Activated CD8-positive, alpha-beta T cell treated with anti-CD3 and anti-CD28 coated beads, Interleukin-2, amount 10 ng/mL, durations not matched to agents 7 days and 5 days (primary cell): ENCODE measurements at regions of chr13 and their contacts with region 1.

Region 1: DNA sequence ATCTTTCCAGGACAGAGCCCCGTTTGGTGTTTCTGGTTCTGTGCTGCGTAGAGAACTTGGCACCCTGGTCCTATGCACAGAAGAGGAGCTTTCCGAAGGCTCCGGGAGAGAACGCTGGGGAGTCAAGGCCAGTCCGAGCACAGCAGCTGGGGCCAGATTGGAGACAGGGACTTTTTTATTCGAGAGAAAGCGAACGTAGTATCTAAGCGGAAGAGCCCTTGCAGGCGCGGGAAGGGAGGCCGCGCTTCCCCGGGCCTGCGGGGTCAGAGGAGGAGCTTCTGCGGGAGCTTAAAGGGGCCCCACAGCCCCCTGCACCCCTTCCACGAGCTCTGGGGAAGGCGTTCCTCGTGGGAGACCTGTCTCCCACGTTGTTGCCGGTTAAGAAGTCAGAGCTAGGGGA is 48.6 kb upstream of the ARHGEF7 start:
- DNase-seq: no peak
- ATAC-seq: no peak
- H3K4me3 Mint-ChIP-seq: peak overlapping the region; percentile 27
- H3K27ac Mint-ChIP-seq: no peak overlapping the region
- H3K4me1 Mint-ChIP-seq: peaks cover 4% of the 10 kb centered on the region
- H3K27me3 Mint-ChIP-seq: peaks cover 44% of the 10 kb centered on the region

Region 2: DNA sequence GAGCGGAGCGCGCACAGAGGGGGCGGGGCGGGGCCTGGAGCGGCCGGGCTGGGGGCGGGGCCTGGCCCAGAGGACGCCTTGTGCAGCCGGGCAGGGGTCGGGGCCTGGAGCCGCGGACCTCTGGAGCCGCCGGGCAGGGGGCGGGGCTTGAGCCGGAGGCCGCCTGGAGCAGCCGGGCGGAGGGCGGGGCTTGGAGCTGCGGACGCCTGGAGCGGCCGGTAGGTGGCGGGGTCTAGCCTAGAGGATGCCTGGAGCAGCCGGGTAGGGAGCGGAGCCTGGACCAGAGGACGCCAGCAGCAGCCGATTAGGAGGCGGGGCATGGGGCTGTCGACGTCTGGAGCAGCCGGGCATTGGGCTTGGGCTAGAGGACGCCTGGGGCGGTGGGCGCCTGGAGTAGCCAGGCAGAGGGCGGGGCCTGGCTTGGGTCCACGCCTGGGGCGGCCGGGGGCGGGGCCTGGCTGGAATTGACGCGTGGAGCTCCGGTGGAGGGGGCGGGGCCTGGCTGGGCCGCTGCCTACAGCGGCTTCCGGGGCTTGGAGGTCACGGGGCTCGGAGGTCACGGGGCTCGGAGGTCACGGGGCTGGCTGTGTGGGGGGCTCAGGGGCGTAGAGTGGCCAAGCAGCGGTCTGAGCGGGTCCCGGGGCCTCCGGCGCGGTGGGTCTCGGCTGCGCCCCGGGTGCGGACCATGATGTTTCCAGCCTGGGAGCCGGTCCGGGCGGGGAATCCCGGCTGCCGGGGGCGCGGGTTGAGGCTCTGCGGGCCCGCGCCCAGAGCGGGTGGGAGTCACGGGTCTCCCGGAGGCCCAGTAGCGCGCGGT is 151.3 kb before region 1 on chr13 and contains the start of gene ANKRD10:
- CTCF ChIA-PET with region 1: interaction called, 10 read pairs
- POLR2A ChIA-PET with region 1: no interaction called
- DNase-seq: peak; percentile 97
- ATAC-seq: peak; percentile 83
- H3K4me3 Mint-ChIP-seq: peak within 1 kb of the TSS; percentile 92
- H3K27ac Mint-ChIP-seq: peak within 1 kb of the TSS; percentile 97
- H3K4me1 Mint-ChIP-seq: peaks cover 43% of the 10 kb centered on the region
- H3K27me3 Mint-ChIP-seq: no peaks in the 10 kb centered on the region
- total RNA-seq, gene ANKRD10: 83.9 to 86.3 TPM

Region 3: DNA sequence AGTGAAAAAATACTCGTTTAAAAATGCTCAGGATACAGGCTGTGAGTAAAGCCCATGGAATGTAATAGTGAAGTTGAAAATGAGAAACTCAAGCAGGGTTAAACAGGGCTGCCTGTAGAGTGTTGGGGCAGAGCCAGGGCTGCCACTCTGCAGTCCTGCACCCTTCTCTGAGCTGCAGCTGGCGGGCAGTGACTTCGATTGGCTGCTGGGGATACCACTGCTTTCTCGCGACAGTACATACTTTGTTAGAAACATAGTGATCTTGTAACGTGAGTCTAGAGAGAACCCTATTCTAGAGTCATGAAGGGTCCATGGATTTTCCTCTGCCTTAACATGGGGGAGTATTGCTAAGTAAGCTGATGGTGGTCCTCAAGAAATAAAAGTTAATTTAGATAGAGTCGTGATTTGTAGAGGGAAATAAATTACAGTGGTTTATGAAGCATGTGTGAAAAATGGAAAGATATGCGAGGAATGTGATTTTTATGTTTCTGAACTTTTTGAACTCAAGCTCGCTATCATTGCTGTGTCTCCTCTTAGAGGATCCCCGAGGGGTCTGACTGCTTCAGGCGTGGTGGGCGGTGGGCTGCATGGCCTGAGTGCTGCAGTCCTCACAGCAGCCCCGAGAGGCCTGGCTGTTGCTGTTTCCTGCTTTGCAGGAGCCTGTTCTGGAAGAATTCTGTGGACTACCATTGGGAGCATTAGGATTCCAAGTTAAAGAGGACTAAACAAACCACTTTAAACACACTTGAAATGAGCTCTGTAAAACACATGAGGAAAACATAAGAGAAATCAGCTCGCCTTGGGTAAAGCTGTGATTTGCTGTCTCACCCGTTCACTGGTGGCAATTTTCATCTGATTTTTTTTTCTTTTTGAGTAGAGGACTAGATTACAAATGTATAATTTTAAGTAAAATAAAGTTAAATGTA is 144.3 kb after region 1 on chr13:
- CTCF ChIA-PET with region 1: interaction called, 60 read pairs
- POLR2A ChIA-PET with region 1: no interaction called
- DNase-seq: no peak
- ATAC-seq: no peak
- H3K4me3 Mint-ChIP-seq: no peak overlapping the region
- H3K27ac Mint-ChIP-seq: no peak overlapping the region
- H3K4me1 Mint-ChIP-seq: peaks cover 7% of the 10 kb centered on the region
- H3K27me3 Mint-ChIP-seq: no peaks in the 10 kb centered on the region

Region 4: GRCh38 chr13:111225810-111226546 is 159.4 kb after region 1 on chr13:
- CTCF ChIA-PET with region 1: interaction called, 39 read pairs
- POLR2A ChIA-PET with region 1: no interaction called
- DNase-seq: no peak
- ATAC-seq: no peak
- H3K4me3 Mint-ChIP-seq: no peak overlapping the region
- H3K27ac Mint-ChIP-seq: no peak overlapping the region
- H3K4me1 Mint-ChIP-seq: peaks cover 26% of the 10 kb centered on the region
- H3K27me3 Mint-ChIP-seq: no peaks in the 10 kb centered on the region

Region 5: DNA sequence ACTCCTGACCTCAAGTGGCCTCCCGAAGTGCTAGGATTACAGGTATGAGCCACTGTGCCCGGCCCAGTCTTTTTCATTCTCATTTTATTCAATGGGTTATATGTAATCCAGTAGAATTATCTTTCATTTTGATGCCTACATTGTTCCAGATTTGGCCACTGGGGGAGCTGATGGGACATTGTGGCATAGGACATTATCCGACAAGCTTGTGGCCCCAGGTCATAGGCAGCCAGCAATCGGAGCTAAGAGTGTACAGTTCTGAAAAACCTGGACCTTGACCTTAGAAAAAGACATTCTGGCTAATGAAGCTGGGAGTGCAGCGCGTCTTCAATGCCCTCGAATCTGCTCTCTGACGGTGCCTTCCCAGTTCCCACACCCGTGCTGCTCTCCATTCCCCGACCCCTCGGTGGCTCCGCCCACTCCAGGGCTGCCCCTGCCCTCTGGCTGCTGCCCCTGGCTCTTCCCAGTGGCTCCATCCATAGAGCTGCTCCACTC is 362.6 kb after region 1 on chr13:
- CTCF ChIA-PET with region 1: interaction called, 10 read pairs
- POLR2A ChIA-PET with region 1: no interaction called
- DNase-seq: peak; percentile 58
- ATAC-seq: peak; percentile 75
- H3K4me3 Mint-ChIP-seq: no peak overlapping the region
- H3K27ac Mint-ChIP-seq: no peak overlapping the region
- H3K4me1 Mint-ChIP-seq: no peaks in the 10 kb centered on the region
- H3K27me3 Mint-ChIP-seq: peaks cover 13% of the 10 kb centered on the region